ENCODE measurements at regions of chr3 and their contacts with region 1.

Region 1: GRCh38 chr3:112531358-112531781 is 30.4 kb downstream of the ATG3 start:
- DNase-seq: peak in 1 of 2 donors; percentile 61
- ATAC-seq: peak in 1 of 3 donors; percentile 57
- H3K4me3 ChIP-seq: no peak overlapping the region
- H3K4me3 Mint-ChIP-seq: no peak overlapping the region
- H3K27ac ChIP-seq: no peak overlapping the region
- H3K27ac Mint-ChIP-seq: peak overlapping the region; percentile 6 to 53
- H3K4me1 ChIP-seq: no peaks in the 10 kb centered on the region
- H3K4me1 Mint-ChIP-seq: peaks cover 5% of the 10 kb centered on the region in 2 donors
- H3K27me3 ChIP-seq: no peaks in the 10 kb centered on the region
- H3K27me3 Mint-ChIP-seq: no peaks in the 10 kb centered on the region
- CTCF ChIP-seq: peak; percentile 84

Region 2: DNA sequence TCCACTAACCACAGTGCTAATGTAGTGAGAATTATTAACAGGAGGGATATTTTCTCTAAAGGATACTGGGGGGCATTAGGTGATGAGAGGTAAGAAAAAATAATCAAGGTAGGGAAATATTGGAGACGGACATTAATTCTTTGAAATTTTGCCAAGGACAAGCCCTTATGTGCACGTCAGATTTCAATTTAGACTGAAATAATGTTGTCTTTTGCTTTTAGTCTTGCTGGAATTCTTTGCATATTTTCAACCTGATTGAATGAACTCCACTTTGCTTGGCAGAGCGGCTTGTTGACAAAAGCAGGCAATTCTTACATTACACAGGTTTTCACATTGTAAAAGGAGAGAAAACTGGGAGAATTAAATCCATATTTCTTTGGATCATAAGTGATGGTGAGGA is 470.2 kb before region 1 on chr3:
- intact Hi-C with region 1: no loop called
- DNase-seq: no peak
- ATAC-seq: no peak
- H3K4me3 ChIP-seq: no peak overlapping the region
- H3K4me3 Mint-ChIP-seq: no peak overlapping the region
- H3K27ac ChIP-seq: no peak overlapping the region
- H3K27ac Mint-ChIP-seq: no peak overlapping the region
- H3K4me1 ChIP-seq: no peaks in the 10 kb centered on the region
- H3K4me1 Mint-ChIP-seq: no peaks in the 10 kb centered on the region
- H3K27me3 ChIP-seq: no peaks in the 10 kb centered on the region
- H3K27me3 Mint-ChIP-seq: peaks cover 11 to 16% of the 10 kb centered on the region in 2 donors
- CTCF ChIP-seq: no peak

Region 3: GRCh38 chr3:112111785-112112402 is 419.5 kb before region 1 on chr3:
- intact Hi-C with region 1: loop called (anchors 1 kb)
- DNase-seq: peak; percentile 23 to 86
- ATAC-seq: peak; percentile 81 to 90 (median 87)
- H3K4me3 ChIP-seq: no peak overlapping the region
- H3K4me3 Mint-ChIP-seq: no peak overlapping the region
- H3K27ac ChIP-seq: no peak overlapping the region
- H3K27ac Mint-ChIP-seq: no peak overlapping the region
- H3K4me1 ChIP-seq: peaks cover 12% of the 10 kb centered on the region
- H3K4me1 Mint-ChIP-seq: peaks cover 10 to 18% of the 10 kb centered on the region in 2 donors
- H3K27me3 ChIP-seq: no peaks in the 10 kb centered on the region
- H3K27me3 Mint-ChIP-seq: no peaks in the 10 kb centered on the region
- CTCF ChIP-seq: peak; percentile 62

Region 4: DNA sequence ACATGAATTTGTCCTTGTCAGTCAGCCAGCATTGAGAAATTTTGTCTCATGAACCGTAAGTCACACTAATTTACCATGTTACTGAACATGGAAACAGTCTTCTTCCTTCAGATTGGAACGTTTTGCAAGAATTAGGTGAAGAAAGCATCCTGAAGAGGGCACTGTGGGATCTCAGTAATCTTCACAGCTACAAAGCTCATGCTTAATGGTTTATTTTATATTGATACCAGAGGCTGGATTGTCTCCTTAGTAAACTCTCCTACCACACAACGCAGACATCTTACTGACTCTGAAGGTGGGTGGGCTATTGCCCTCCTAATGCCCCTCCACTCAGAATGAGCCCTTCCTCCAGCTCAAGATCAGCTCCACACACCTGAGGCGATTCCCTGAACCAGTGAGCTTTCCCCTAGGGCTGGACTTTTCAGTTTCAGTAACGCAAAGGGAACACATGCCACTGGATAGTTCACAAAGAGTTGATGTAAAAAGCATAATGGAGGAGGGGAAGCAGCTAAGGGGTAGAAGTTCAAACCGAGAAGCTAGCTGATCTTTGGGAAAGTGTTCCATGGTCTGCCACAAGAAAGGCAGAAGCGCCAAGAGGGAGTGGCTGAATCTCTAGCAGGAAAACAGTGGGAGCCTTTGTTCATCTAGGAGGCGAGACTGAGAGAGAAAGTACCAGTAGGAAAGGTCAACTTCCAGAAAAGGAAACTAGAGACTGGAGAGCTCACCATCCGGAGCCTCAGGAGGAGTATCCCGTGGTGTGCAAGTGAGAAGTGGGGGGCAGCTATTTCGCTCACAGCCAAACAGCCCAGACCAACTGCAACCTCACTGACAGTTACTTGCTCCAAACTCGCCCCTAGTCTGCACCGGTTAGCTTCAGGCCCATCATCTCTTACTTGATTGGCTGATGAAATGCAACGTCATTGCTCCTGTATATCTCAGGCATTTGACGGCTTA is 237.7 kb before region 1 on chr3 and contains the start of gene SLC9C1:
- intact Hi-C with region 1: loop called (anchors 1 kb)
- DNase-seq: peak in 1 of 2 donors; percentile 78
- ATAC-seq: peak; percentile 47 to 80 (median 75)
- H3K4me3 ChIP-seq: peak within 1 kb of the TSS; percentile 1
- H3K4me3 Mint-ChIP-seq: peak within 1 kb of the TSS; percentile 72
- H3K27ac ChIP-seq: no peak within 1 kb of the TSS
- H3K27ac Mint-ChIP-seq: peak within 1 kb of the TSS in 1 of 2 donors; percentile 72
- H3K4me1 ChIP-seq: peaks cover 9% of the 10 kb centered on the region
- H3K4me1 Mint-ChIP-seq: peaks cover 21 to 31% of the 10 kb centered on the region in 2 donors
- H3K27me3 ChIP-seq: no peaks in the 10 kb centered on the region
- H3K27me3 Mint-ChIP-seq: no peaks in the 10 kb centered on the region
- CTCF ChIP-seq: peak; percentile 46
- total RNA-seq, gene SLC9C1: not detected

Region 5: DNA sequence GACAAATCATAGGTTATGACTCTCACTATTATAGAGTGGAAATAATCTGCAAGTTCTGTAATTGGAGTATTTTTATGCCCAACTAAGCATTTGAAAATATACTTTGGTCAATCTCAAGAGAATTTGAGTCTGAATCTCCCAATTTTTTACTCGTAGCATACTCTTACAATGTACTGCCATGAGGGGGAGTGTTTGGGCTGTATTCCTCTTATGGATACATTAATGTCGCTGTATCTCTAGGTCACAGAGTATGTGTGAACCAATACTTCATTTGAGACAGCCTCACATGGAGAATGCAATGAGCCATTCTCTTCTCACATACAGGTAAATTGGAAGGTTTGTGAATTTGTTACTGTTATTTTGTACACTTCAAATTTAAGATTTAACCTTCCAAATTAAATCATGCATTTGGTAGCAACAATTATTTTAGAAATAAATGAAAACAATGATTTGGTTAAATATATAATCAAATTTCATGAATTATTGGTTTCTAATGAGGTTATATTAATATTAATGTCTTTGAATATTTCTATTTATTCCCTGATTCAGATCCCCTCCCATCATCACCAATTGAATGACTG is 203.9 kb before region 1 on chr3:
- intact Hi-C with region 1: loop called (anchors 1 kb)
- DNase-seq: peak in 1 of 2 donors; percentile 81
- ATAC-seq: peak; percentile 84 to 96 (median 88)
- H3K4me3 ChIP-seq: no peak overlapping the region
- H3K4me3 Mint-ChIP-seq: no peak overlapping the region
- H3K27ac ChIP-seq: no peak overlapping the region
- H3K27ac Mint-ChIP-seq: no peak overlapping the region
- H3K4me1 ChIP-seq: no peaks in the 10 kb centered on the region
- H3K4me1 Mint-ChIP-seq: peaks cover 0 to 4% of the 10 kb centered on the region in 2 donors
- H3K27me3 ChIP-seq: peaks cover 7% of the 10 kb centered on the region
- H3K27me3 Mint-ChIP-seq: peaks cover 18 to 19% of the 10 kb centered on the region in 2 donors
- CTCF ChIP-seq: peak; percentile 64

Region 6: GRCh38 chr3:112424394-112424793 is 107.0 kb before region 1 on chr3:
- intact Hi-C with region 1: no loop called
- DNase-seq: no peak
- ATAC-seq: no peak
- H3K4me3 ChIP-seq: no peak overlapping the region
- H3K4me3 Mint-ChIP-seq: no peak overlapping the region
- H3K27ac ChIP-seq: no peak overlapping the region
- H3K27ac Mint-ChIP-seq: no peak overlapping the region
- H3K4me1 ChIP-seq: no peaks in the 10 kb centered on the region
- H3K4me1 Mint-ChIP-seq: no peaks in the 10 kb centered on the region
- H3K27me3 ChIP-seq: no peaks in the 10 kb centered on the region
- H3K27me3 Mint-ChIP-seq: no peaks in the 10 kb centered on the region
- CTCF ChIP-seq: no peak

Measured in natural killer cell (primary cell).